K562 (cell line): ENCODE measurements at regions of chr11 and their contacts with region 1.

Region 1: GRCh38 chr11:61733120-61733978 is 19.1 kb upstream of the MYRF start:
- DNase-seq: peak; percentile 87 to 90 (median 88)
- ATAC-seq: peak; percentile 94
- H3K4me3 ChIP-seq: no peak overlapping the region
- H3K27ac ChIP-seq: no peak overlapping the region
- H3K4me1 ChIP-seq: peaks cover 0 to 34% of the 10 kb centered on the region in 2 experiments; a peak in 2 of 5 replicates
- H3K27me3 ChIP-seq: peaks cover 4 to 46% of the 10 kb centered on the region in 2 experiments; a peak in 4 of 5 replicates
- CTCF ChIP-seq: peak; percentile 95 to 99 (median 98)
- EP300 ChIP-seq: 0 out of 2 replicates have a peak, but pooled peaks have one; percentile 29
- POLR2A ChIP-seq: no peak
- RAD21 ChIP-seq: peak; percentile 80 to 93

Region 2: DNA sequence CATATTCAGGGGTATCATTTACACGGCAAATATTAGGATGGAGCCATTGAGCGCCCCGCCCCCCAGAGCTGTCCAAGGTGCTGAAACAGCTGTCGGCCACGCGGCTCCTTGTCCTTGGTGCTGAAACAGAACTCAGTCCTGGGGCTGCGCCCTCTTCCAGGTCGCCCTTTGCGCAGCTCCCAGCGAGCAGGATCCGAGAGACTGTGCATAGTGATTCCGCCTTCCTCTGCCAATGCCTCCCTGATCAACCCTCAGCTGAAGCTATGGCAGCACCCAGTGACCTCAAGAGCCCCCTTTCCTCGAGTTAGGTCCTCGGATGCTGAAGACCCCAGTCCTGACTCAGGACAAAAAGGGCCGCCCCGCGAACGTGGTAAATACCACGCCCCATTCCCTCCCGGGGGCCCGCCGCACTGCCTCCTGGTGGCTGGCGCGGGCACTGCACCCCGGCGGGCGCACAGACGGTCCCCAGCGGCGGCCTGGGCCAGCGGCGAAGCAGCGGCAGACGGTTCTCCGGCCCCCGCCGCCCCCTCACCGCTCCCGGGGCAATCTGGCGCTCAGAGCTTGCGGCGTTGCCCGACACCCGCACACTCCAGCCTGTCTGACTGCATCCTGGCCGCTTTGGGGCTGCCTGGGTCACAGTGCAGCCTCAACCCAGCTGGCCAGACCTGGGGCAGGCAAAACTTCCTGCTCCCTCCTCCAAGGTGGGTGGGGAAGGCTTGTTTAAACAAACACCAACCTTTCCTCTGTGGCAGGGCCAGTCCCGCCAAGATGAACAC is 165.9 kb before region 1 on chr11:
- CTCF ChIA-PET with region 1: no interaction called
- POLR2A ChIA-PET with region 1: no interaction called
- in situ Hi-C with region 1: no loop called
- intact Hi-C with region 1: no loop called
- DNase-seq: peak; percentile 90 to 95 (median 94)
- ATAC-seq: peak; percentile 98
- H3K4me3 ChIP-seq: no peak overlapping the region
- H3K27ac ChIP-seq: no peak overlapping the region
- H3K4me1 ChIP-seq: peaks cover 0 to 10% of the 10 kb centered on the region in 2 experiments; a peak in 2 of 5 replicates
- H3K27me3 ChIP-seq: peaks cover 0 to 20% of the 10 kb centered on the region in 2 experiments; a peak in 2 of 5 replicates
- CTCF ChIP-seq: peak; percentile 74 to 97 (median 86)
- EP300 ChIP-seq: no peak
- POLR2A ChIP-seq: no peak
- RAD21 ChIP-seq: peak; percentile 34 to 44; a peak in 3 of 4 replicates

Region 3: GRCh38 chr11:61639816-61640443 is 93.4 kb before region 1 on chr11:
- CTCF ChIA-PET with region 1: no interaction called
- POLR2A ChIA-PET with region 1: no interaction called
- in situ Hi-C with region 1: no loop called
- intact Hi-C with region 1: loop called (anchors 1 kb)
- DNase-seq: peak in 1 of 4 experiments; percentile 74
- ATAC-seq: peak; percentile 25
- H3K4me3 ChIP-seq: no peak overlapping the region
- H3K27ac ChIP-seq: no peak overlapping the region
- H3K4me1 ChIP-seq: peaks cover 3 to 5% of the 10 kb centered on the region in 2 experiments; a peak in 3 of 5 replicates
- H3K27me3 ChIP-seq: peaks cover 28 to 34% of the 10 kb centered on the region in 2 experiments
- CTCF ChIP-seq: no peak
- EP300 ChIP-seq: no peak
- POLR2A ChIP-seq: no peak
- RAD21 ChIP-seq: no peak

Region 4: DNA sequence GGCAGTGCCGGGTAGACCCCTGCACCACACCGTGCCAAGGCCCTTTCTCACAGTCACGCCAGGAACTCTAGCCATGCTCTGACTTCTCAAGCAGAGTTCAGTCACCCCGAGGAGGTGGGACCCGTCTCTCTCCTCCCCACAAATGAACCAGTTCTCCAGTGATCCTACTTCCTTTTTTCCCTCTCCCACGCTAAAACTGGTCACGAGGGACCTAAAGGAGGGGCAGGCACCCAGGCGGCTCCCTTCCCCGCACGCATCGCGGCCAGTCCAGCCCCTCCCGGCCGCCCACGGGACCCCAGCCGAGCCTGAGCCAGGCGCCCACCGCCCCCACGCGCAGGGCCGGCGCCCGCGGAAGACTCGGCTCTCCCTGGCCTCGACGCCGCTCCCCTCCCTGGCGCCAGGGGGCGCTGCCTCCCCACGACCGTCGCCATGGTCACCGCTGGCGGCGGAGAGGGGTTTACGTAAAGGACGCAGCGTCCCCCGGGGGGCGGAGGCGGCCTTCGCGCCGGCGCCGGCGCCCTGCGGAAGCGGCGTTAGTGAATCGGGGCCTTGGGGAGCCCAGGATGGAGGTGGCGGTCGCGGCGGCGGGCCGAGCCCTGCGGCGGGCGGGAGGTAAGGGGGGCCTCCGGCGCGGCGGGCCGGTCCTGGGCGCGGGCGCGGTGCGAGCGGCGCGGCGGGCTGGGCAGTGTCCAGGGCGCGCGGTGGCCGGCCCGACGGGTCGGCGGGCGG is 53.3 kb before region 1 on chr11 and contains the start of gene DAGLA:
- CTCF ChIA-PET with region 1: interaction called, 17 read pairs
- POLR2A ChIA-PET with region 1: interaction called, 3 read pairs
- in situ Hi-C with region 1: loop called (anchors 5 kb)
- intact Hi-C with region 1: loop called (anchors 2 kb)
- DNase-seq: peak; percentile 79 to 97 (median 94)
- ATAC-seq: peak; percentile 93
- H3K4me3 ChIP-seq: peak within 1 kb of the TSS; percentile 33
- H3K27ac ChIP-seq: no peak within 1 kb of the TSS
- H3K4me1 ChIP-seq: peaks cover 0 to 16% of the 10 kb centered on the region in 2 experiments; a peak in 3 of 5 replicates
- H3K27me3 ChIP-seq: peaks cover 47 to 84% of the 10 kb centered on the region in 2 experiments
- CTCF ChIP-seq: peak; percentile 86 to 92 (median 91)
- EP300 ChIP-seq: no peak
- POLR2A ChIP-seq: no peak
- RAD21 ChIP-seq: peak; percentile 42 to 66
- polyA plus RNA-seq, gene DAGLA: not detected

Region 5: GRCh38 chr11:61826930-61827570 is 93.7 kb after region 1 on chr11:
- CTCF ChIA-PET with region 1: no interaction called
- POLR2A ChIA-PET with region 1: no interaction called
- in situ Hi-C with region 1: no loop called
- intact Hi-C with region 1: no loop called
- DNase-seq: no peak
- ATAC-seq: no peak
- H3K4me3 ChIP-seq: no peak overlapping the region
- H3K27ac ChIP-seq: no peak overlapping the region
- H3K4me1 ChIP-seq: peaks cover 0 to 18% of the 10 kb centered on the region in 2 experiments; a peak in 3 of 5 replicates
- H3K27me3 ChIP-seq: no peaks in the 10 kb centered on the region
- CTCF ChIP-seq: no peak
- EP300 ChIP-seq: no peak
- POLR2A ChIP-seq: no peak
- RAD21 ChIP-seq: no peak